Upper lobe of right lung (tissue), 1 donor: ENCODE measurements at regions of chr11 and their contacts with region 1.

Region 1: GRCh38 chr11:17063171-17064002 is 14.1 kb downstream of the RPS13 start:
- DNase-seq: peak; percentile 82
- ATAC-seq: peak; percentile 99
- H3K4me3 ChIP-seq: no peak overlapping the region
- H3K27ac ChIP-seq: no peak overlapping the region
- H3K4me1 ChIP-seq: no peaks in the 10 kb centered on the region
- H3K27me3 ChIP-seq: no peaks in the 10 kb centered on the region
- CTCF ChIP-seq: peak; percentile 73

Region 2: GRCh38 chr11:16958833-16959232 is 104.6 kb before region 1 on chr11:
- intact Hi-C with region 1: loop called (anchors 10 kb)
- DNase-seq: no peak
- ATAC-seq: no peak
- H3K4me3 ChIP-seq: no peak overlapping the region
- H3K27ac ChIP-seq: no peak overlapping the region
- H3K4me1 ChIP-seq: peaks cover 6% of the 10 kb centered on the region
- H3K27me3 ChIP-seq: no peaks in the 10 kb centered on the region
- CTCF ChIP-seq: no peak